Naive thymus-derived CD4-positive, alpha-beta T cell (primary cell): ENCODE measurements at regions of chr2 and their contacts with region 1.

Region 1: DNA sequence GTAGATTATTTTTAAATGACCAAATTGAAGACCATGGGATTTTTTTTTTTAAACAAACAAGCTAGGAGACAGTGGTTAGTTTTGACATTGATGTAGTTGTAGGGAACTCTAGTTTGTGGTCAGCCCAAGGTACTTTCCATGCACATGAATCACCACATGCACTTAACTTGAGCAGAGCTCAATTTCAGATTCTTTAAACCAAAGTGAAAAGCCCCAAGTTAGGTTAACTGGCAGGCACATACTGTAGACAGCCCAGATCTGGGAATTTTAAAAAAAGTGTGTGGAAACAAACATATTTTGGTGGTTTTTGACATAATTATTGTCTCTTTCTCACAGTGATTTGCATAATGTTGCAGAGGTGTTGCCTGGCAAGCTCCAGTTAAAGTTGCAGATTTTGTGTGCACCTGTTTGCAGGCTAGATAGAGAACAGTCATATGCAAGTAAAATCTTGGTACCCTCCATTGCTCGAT is 88.4 kb downstream of the BCL2L11 start:
- DNase-seq: peak in 1 of 9 donors; percentile 41
- ATAC-seq: peak; percentile 54
- H3K4me3 ChIP-seq: no peak overlapping the region
- H3K4me3 Mint-ChIP-seq: peak overlapping the region in 1 of 10 donors; percentile 61
- H3K27ac ChIP-seq: no peak overlapping the region
- H3K27ac Mint-ChIP-seq: peak overlapping the region in 1 of 9 donors; percentile 51
- H3K4me1 ChIP-seq: no peaks in the 10 kb centered on the region
- H3K4me1 Mint-ChIP-seq: peaks cover 0 to 27% (median 0%) of the 10 kb centered on the region in 7 donors
- H3K27me3 ChIP-seq: no peaks in the 10 kb centered on the region
- H3K27me3 Mint-ChIP-seq: peaks cover 0 to 13% (median 8%) of the 10 kb centered on the region in 5 donors

Region 2: DNA sequence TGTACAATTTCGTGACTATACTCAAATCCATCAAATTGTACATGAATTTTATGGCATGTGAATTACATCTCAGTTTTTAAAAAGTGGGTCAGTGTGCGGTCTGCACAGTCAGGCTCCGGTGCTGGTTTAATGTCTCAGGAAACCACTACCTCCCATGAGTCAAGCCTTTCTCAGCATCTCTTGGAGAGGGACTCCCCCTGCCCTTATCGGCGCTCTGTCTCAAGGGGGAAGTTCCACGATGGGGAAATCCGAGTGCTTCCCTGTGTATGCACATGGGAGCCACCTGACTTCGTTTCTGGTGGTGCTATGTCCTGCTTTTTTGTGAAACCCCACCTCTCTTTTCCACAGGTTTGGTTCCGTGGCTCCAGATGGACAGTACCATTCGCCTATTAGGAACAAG is 404.2 kb before region 1 on chr2:
- CTCF ChIA-PET with region 1: no interaction called
- POLR2A ChIA-PET with region 1: no interaction called
- intact Hi-C with region 1: no loop called
- DNase-seq: peak in 1 of 9 donors; percentile 69
- ATAC-seq: peak; percentile 89
- H3K4me3 ChIP-seq: no peak overlapping the region
- H3K4me3 Mint-ChIP-seq: peak overlapping the region in 1 of 10 donors; percentile 6
- H3K27ac ChIP-seq: no peak overlapping the region
- H3K27ac Mint-ChIP-seq: peak overlapping the region in 1 of 9 donors; percentile 47
- H3K4me1 ChIP-seq: no peaks in the 10 kb centered on the region
- H3K4me1 Mint-ChIP-seq: peaks cover 0 to 14% (median 0%) of the 10 kb centered on the region in 7 donors
- H3K27me3 ChIP-seq: peaks cover 0 to 3% of the 10 kb centered on the region in 2 donors
- H3K27me3 Mint-ChIP-seq: peaks cover 24 to 57% (median 39%) of the 10 kb centered on the region in 5 donors

Region 3: GRCh38 chr2:111106706-111107105 is 102.4 kb before region 1 on chr2:
- CTCF ChIA-PET with region 1: no interaction called
- POLR2A ChIA-PET with region 1: no interaction called
- intact Hi-C with region 1: no loop called
- DNase-seq: no peak
- ATAC-seq: no peak
- H3K4me3 ChIP-seq: no peak overlapping the region
- H3K4me3 Mint-ChIP-seq: no peak overlapping the region
- H3K27ac ChIP-seq: no peak overlapping the region
- H3K27ac Mint-ChIP-seq: no peak overlapping the region
- H3K4me1 ChIP-seq: no peaks in the 10 kb centered on the region
- H3K4me1 Mint-ChIP-seq: peaks cover 0 to 3% (median 0%) of the 10 kb centered on the region in 7 donors
- H3K27me3 ChIP-seq: no peaks in the 10 kb centered on the region
- H3K27me3 Mint-ChIP-seq: peaks cover 0 to 72% (median 15%) of the 10 kb centered on the region in 5 donors

Region 4: DNA sequence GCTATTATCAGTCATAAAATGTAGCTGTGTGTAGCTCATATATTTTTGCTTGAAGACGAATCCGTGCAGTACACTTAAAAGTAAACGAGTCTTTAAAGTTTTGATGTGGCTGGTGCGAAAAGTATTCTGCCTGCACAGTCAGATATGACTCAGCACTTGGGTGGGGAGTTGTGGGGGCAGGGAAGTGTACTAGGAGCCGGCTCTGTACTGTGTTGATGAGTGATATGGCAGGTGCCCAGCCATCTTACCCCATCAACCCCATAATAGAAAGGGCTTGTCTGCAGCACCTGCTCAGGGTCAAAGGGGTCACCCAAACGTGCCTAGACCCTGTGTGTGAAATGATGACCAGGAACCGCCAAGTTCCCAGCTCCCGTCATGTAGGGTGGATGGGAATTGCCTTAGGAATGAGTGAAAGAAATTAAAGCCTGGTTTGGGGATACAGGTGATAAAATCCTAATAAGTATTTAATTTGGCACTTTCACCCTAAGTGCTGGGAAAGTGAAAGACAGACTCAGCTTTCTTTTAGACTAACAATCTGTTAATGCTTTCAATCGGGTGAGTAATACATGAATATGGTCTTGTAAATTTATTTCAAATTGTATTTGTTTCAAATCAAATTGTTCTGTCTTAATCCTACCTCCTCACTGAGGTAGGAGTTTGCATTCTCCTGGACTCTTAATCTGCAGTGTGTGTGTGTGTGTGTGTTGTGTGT is 40.4 kb before region 1 on chr2:
- CTCF ChIA-PET with region 1: no interaction called
- POLR2A ChIA-PET with region 1: no interaction called
- intact Hi-C with region 1: loop called in 1 of 2 experiments (anchors 5 kb)
- DNase-seq: peak in 4 of 9 donors; percentile 12 to 69 (median 15)
- ATAC-seq: peak; percentile 53
- H3K4me3 ChIP-seq: no peak overlapping the region
- H3K4me3 Mint-ChIP-seq: no peak overlapping the region
- H3K27ac ChIP-seq: no peak overlapping the region
- H3K27ac Mint-ChIP-seq: peak overlapping the region in 2 of 9 donors; percentile 36 to 56
- H3K4me1 ChIP-seq: peaks cover 5 to 6% of the 10 kb centered on the region in 2 donors
- H3K4me1 Mint-ChIP-seq: peaks cover 0 to 22% (median 0%) of the 10 kb centered on the region in 7 donors
- H3K27me3 ChIP-seq: no peaks in the 10 kb centered on the region
- H3K27me3 Mint-ChIP-seq: peaks cover 0 to 32% (median 0%) of the 10 kb centered on the region in 5 donors

Region 5: DNA sequence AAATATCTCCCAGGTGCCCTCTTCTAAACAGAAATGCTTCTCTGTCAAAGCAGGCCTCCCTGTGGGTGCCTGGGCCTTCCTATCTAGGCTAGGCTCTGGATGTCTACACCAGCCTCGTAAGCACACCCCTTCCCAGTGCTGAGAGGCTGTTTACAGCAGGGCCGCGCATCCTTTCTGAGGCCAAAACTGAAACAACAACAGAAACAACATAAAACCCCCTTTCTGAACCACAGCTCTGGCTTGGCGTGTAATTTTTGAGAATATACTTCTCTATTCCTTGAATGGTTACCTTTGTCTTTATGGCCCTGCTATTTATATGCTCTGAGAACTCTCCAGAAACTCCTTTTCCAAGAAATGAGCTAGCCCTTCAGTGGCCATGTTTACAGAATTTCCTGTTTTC is 30.0 kb after region 1 on chr2:
- CTCF ChIA-PET with region 1: no interaction called
- POLR2A ChIA-PET with region 1: no interaction called
- intact Hi-C with region 1: loop called in 1 of 2 experiments (anchors 1 kb)
- DNase-seq: peak in 1 of 9 donors; percentile 38
- ATAC-seq: no peak
- H3K4me3 ChIP-seq: no peak overlapping the region
- H3K4me3 Mint-ChIP-seq: peak overlapping the region in 1 of 10 donors; percentile 41
- H3K27ac ChIP-seq: no peak overlapping the region
- H3K27ac Mint-ChIP-seq: peak overlapping the region in 1 of 9 donors; percentile 91
- H3K4me1 ChIP-seq: no peaks in the 10 kb centered on the region
- H3K4me1 Mint-ChIP-seq: peaks cover 0 to 37% (median 0%) of the 10 kb centered on the region in 7 donors
- H3K27me3 ChIP-seq: no peaks in the 10 kb centered on the region
- H3K27me3 Mint-ChIP-seq: peaks cover 0 to 9% (median 3%) of the 10 kb centered on the region in 5 donors

Region 6: GRCh38 chr2:111705711-111706336 is 496.7 kb after region 1 on chr2:
- CTCF ChIA-PET with region 1: no interaction called
- POLR2A ChIA-PET with region 1: no interaction called
- intact Hi-C with region 1: loop called in 1 of 2 experiments (anchors 2 kb)
- DNase-seq: peak in 1 of 9 donors; percentile 59
- ATAC-seq: peak; percentile 49
- H3K4me3 ChIP-seq: no peak overlapping the region
- H3K4me3 Mint-ChIP-seq: peak overlapping the region in 1 of 10 donors; percentile 33
- H3K27ac ChIP-seq: no peak overlapping the region
- H3K27ac Mint-ChIP-seq: peak overlapping the region in 2 of 9 donors; percentile 46 to 85
- H3K4me1 ChIP-seq: peaks cover 0 to 7% of the 10 kb centered on the region in 2 donors
- H3K4me1 Mint-ChIP-seq: peaks cover 0 to 74% (median 3%) of the 10 kb centered on the region in 7 donors
- H3K27me3 ChIP-seq: no peaks in the 10 kb centered on the region
- H3K27me3 Mint-ChIP-seq: peaks cover 0 to 15% (median 0%) of the 10 kb centered on the region in 5 donors